Heart right ventricle (tissue), 16 donors: ENCODE measurements at regions of chr16 and their contacts with region 1.

Region 1: DNA sequence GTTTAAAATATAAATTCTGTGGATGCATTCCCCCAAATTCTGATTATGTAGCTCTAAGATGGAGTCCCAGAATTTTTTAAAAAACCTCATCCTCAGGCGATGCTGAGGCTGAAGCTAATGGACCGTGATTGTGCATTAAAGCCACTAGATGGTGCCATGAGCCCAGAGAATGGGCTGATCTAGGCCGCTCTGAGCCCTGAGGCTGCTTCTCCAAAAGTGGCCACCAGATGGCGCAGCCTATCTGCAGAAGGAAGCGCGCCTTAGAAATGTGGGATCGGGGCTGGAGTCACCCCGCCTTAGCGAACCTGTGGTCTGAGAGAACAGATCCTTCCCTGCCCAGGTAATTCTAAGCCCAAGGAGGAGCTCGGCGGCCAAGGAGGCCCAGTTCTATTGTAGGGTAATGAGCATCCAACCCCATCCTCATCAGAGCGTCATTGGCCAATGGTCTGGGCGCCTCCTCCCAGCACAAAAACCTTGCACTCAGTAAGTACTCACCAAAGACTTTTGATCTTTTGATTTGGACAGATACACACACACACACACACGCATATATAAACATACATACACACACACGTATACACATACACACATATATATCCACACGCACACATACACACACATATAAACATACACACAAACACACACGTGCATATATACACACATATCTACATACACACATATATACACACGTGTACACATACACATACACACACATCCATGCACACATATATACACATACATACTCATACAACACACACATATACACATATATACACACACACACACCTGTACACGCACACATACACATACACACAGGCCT is 13.7 kb upstream of the MMP2 start:
- DNase-seq: peak; percentile 87 to 88
- ATAC-seq: peak; percentile 89 to 95 (median 92)
- H3K4me3 ChIP-seq: peak overlapping the region in 2 of 10 donors; percentile 17 to 34
- H3K27ac ChIP-seq: no peak overlapping the region
- H3K4me1 ChIP-seq: peaks cover 0 to 4% (median 0%) of the 10 kb centered on the region in 9 donors
- H3K27me3 ChIP-seq: no peaks in the 10 kb centered on the region
- CTCF ChIP-seq: peak; percentile 100

Region 2: GRCh38 chr16:55398762-55399161 is 66.5 kb before region 1 on chr16:
- intact Hi-C with region 1: loop called in 1 of 10 experiments (anchors 2 kb)
- DNase-seq: no peak
- ATAC-seq: peak in 6 of 8 donors; percentile 2 to 52 (median 36)
- H3K4me3 ChIP-seq: no peak overlapping the region
- H3K27ac ChIP-seq: no peak overlapping the region
- H3K4me1 ChIP-seq: peaks cover 0 to 18% (median 3%) of the 10 kb centered on the region in 9 donors
- H3K27me3 ChIP-seq: peaks cover 0 to 8% (median 0%) of the 10 kb centered on the region in 7 donors
- CTCF ChIP-seq: no peak

Region 3: DNA sequence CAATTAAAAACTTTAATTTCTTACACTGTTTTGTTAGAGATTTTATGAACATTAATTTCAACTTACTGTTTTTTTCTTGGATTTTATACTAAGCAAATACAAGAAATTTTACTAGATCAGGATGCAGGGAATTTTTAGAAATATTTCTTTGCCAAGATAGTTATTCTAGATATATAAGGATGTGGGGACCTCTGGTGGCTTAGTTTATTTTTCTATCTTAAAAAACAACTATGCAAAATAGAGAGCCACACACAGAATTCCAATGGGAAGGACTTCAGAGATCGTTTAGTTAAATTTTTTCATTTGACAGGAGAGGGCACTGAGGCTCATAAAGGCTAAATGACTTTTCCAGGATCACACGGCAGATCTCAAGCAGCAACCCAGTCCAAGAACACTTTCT is 78.2 kb after region 1 on chr16:
- intact Hi-C with region 1: loop called (anchors 1 to 5 kb)
- DNase-seq: no peak
- ATAC-seq: peak in 4 of 8 donors; percentile 31 to 75 (median 39)
- H3K4me3 ChIP-seq: no peak overlapping the region
- H3K27ac ChIP-seq: no peak overlapping the region
- H3K4me1 ChIP-seq: peaks cover 0 to 42% (median 0%) of the 10 kb centered on the region in 9 donors
- H3K27me3 ChIP-seq: no peaks in the 10 kb centered on the region
- CTCF ChIP-seq: peak; percentile 18 to 69 (median 41)

Region 4: GRCh38 chr16:55577887-55578286 is 112.6 kb after region 1 on chr16:
- intact Hi-C with region 1: no loop called
- DNase-seq: no peak
- ATAC-seq: no peak
- H3K4me3 ChIP-seq: no peak overlapping the region
- H3K27ac ChIP-seq: no peak overlapping the region
- H3K4me1 ChIP-seq: peaks cover 0 to 23% (median 0%) of the 10 kb centered on the region in 9 donors
- H3K27me3 ChIP-seq: no peaks in the 10 kb centered on the region
- CTCF ChIP-seq: no peak

Region 5: GRCh38 chr16:55701442-55702319 is 236.4 kb after region 1 on chr16:
- intact Hi-C with region 1: loop called (anchors 1 to 5 kb)
- DNase-seq: peak; percentile 36 to 61
- ATAC-seq: peak; percentile 24 to 88 (median 70)
- H3K4me3 ChIP-seq: no peak overlapping the region
- H3K27ac ChIP-seq: no peak overlapping the region
- H3K4me1 ChIP-seq: peaks cover 0 to 5% (median 0%) of the 10 kb centered on the region in 9 donors
- H3K27me3 ChIP-seq: peaks cover 0 to 16% (median 3%) of the 10 kb centered on the region in 7 donors
- CTCF ChIP-seq: peak; percentile 28 to 72 (median 67)

Region 6: GRCh38 chr16:55842369-55843104 is 377.2 kb after region 1 on chr16:
- intact Hi-C with region 1: loop called (anchors 2 to 10 kb)
- DNase-seq: peak in 1 of 2 donors; percentile 35
- ATAC-seq: peak in 4 of 8 donors; percentile 46 to 69 (median 53)
- H3K4me3 ChIP-seq: no peak overlapping the region
- H3K27ac ChIP-seq: no peak overlapping the region
- H3K4me1 ChIP-seq: no peaks in the 10 kb centered on the region
- H3K27me3 ChIP-seq: peaks cover 0 to 44% (median 24%) of the 10 kb centered on the region in 7 donors
- CTCF ChIP-seq: peak; percentile 64 to 86 (median 79)

Region 7: DNA sequence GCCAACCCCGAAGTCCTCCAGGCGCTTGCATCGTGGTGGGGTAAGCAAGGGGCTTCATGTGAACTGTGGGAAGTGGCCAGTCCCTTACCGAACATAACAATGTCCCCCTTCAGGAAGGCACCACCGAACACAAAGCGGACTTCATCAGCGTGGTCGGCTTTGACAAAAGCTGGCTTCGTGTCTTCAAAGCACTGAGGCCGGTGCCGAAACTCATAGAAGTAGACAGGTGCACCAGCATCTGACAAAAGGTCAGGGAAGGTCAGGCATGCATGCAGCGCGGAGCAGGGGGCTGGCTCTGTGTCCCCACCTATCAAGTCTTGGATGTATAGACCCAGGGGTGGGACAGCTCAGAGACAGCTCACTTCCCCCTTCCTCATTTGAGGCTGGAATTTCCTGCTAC is 384.2 kb after region 1 on chr16:
- intact Hi-C with region 1: loop called in 9 of 10 experiments (anchors 5 to 10 kb)
- DNase-seq: no peak
- ATAC-seq: no peak
- H3K4me3 ChIP-seq: no peak overlapping the region
- H3K27ac ChIP-seq: no peak overlapping the region
- H3K4me1 ChIP-seq: no peaks in the 10 kb centered on the region
- H3K27me3 ChIP-seq: peaks cover 0 to 66% (median 45%) of the 10 kb centered on the region in 7 donors
- CTCF ChIP-seq: no peak